ENCODE measurements at regions of chr19 and their contacts with region 1.

Region 1: DNA sequence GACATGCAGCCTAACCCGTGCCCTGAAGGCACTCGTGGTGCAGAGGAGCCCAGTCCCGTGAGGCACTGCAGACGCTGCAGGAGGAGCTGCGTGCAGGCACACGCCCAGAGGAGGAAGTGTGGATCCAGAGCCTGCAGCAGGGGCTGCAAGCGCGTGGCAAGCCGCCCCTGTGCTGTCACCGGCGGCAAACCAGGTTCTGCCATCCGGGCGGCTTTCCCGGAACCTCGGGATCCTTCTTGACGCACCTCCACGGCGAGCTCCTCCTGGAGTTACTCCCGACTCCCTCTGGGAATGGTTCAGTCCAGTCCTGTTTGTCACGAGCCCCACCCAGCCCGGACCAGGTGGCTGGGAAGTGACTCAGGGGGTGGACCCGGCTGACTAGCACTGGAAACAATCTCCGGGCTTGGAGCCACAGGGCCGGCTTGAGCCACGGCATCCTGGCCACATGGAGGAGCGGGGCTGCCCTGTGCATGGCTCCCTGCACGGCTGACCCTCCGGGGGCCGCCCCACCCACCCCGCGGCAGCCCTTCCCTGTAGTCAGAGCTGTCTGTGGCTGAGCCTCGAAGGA is 10.2 kb downstream of the DPP9 start:
- DNase-seq: peak; percentile 99
- H3K4me3 ChIP-seq: no peak overlapping the region
- H3K27ac ChIP-seq: peak overlapping the region; percentile 52
- H3K4me1 ChIP-seq: peaks cover 70% of the 10 kb centered on the region
- H3K27me3 ChIP-seq: no peaks in the 10 kb centered on the region
- CTCF ChIP-seq: no peak

Region 2: GRCh38 chr19:4352701-4353121 is 360.8 kb before region 1 on chr19:
- CTCF ChIA-PET with region 1: interaction called, 12 read pairs
- dilution Hi-C with region 1: no loop called
- in situ Hi-C with region 1: no loop called
- intact Hi-C with region 1: no loop called
- DNase-seq: no peak
- H3K4me3 ChIP-seq: no peak overlapping the region
- H3K27ac ChIP-seq: no peak overlapping the region
- H3K4me1 ChIP-seq: no peaks in the 10 kb centered on the region
- H3K27me3 ChIP-seq: no peaks in the 10 kb centered on the region
- CTCF ChIP-seq: peak; percentile 62 to 78

Measured in mammary epithelial cell (primary cell).